GM12878 (cell line): ENCODE measurements at regions of chr14 and their contacts with region 1.

Region 1: DNA sequence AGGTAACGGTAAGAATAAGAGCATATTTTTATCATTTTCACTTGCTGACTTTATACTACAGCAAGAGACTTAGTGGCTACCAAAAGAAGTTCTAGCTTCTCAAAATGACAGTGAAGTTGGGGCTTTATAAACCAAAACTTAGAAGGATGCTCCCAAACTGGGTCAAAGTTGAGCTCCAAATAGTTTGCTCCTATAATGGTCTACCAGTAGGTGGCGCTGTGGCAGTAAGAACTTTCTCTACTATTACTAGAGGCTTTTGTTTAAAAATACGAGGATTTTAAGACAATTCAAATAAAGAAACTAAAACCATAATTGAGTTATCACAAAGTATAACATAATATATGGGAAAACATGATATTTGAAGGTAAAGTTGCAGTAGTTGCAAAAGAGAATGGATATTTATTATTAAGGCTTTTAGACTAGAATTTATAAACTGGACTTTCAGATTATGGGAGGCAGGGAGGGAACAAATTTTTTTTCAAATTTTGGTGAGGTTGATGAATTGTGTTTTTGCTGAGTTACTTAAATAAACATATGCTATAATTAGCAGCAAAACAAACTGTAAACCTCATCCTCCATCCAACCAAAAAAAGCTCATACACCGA is 75.0 kb downstream of the TGFB3 start:
- DNase-seq: no peak
- ATAC-seq: peak; percentile 73
- H3K4me3 ChIP-seq: no peak overlapping the region
- H3K27ac ChIP-seq: no peak overlapping the region
- H3K4me1 ChIP-seq: no peaks in the 10 kb centered on the region
- H3K27me3 ChIP-seq: no peaks in the 10 kb centered on the region
- CTCF ChIP-seq: peak; percentile 69 to 78 (median 71)
- EP300 ChIP-seq: no peak
- POLR2A ChIP-seq: no peak
- RAD21 ChIP-seq: peak; percentile 85

Region 2: GRCh38 chr14:75487155-75487671 is 419.6 kb before region 1 on chr14:
- CTCF ChIA-PET with region 1: no interaction called
- POLR2A ChIA-PET with region 1: no interaction called
- RAD21 ChIA-PET with region 1: no interaction called
- SMC1A ChIA-PET with region 1: no interaction called
- in situ Hi-C with region 1: no loop called
- intact Hi-C with region 1: no loop called
- DNase-seq: peak; percentile 89
- ATAC-seq: peak; percentile 84
- H3K4me3 ChIP-seq: no peak overlapping the region
- H3K27ac ChIP-seq: peak overlapping the region; percentile 69
- H3K4me1 ChIP-seq: peaks cover 33% of the 10 kb centered on the region
- H3K27me3 ChIP-seq: no peaks in the 10 kb centered on the region
- CTCF ChIP-seq: no peak
- EP300 ChIP-seq: peak; percentile 75 to 86; a peak in 3 of 4 replicates
- POLR2A ChIP-seq: no peak
- RAD21 ChIP-seq: peak; percentile 9; the same call in 1 of the 2 replicates

Region 3: GRCh38 chr14:75861161-75861621 is 45.6 kb before region 1 on chr14:
- CTCF ChIA-PET with region 1: interaction called, 11 read pairs
- POLR2A ChIA-PET with region 1: no interaction called
- RAD21 ChIA-PET with region 1: no interaction called
- SMC1A ChIA-PET with region 1: interaction called, 3 read pairs
- in situ Hi-C with region 1: no loop called
- intact Hi-C with region 1: no loop called
- DNase-seq: no peak
- ATAC-seq: no peak
- H3K4me3 ChIP-seq: no peak overlapping the region
- H3K27ac ChIP-seq: no peak overlapping the region
- H3K4me1 ChIP-seq: no peaks in the 10 kb centered on the region
- H3K27me3 ChIP-seq: no peaks in the 10 kb centered on the region
- CTCF ChIP-seq: no peak
- EP300 ChIP-seq: no peak
- POLR2A ChIP-seq: no peak
- RAD21 ChIP-seq: no peak

Region 4: GRCh38 chr14:75896341-75896740 is 10.4 kb before region 1 on chr14:
- CTCF ChIA-PET with region 1: interaction called, 10 read pairs
- POLR2A ChIA-PET with region 1: no interaction called
- RAD21 ChIA-PET with region 1: interaction called, 4 read pairs
- SMC1A ChIA-PET with region 1: interaction called, 4 read pairs
- in situ Hi-C with region 1: no loop called
- intact Hi-C with region 1: no loop called
- DNase-seq: no peak
- ATAC-seq: no peak
- H3K4me3 ChIP-seq: no peak overlapping the region
- H3K27ac ChIP-seq: no peak overlapping the region
- H3K4me1 ChIP-seq: no peaks in the 10 kb centered on the region
- H3K27me3 ChIP-seq: no peaks in the 10 kb centered on the region
- CTCF ChIP-seq: no peak
- EP300 ChIP-seq: no peak
- POLR2A ChIP-seq: no peak
- RAD21 ChIP-seq: no peak

Region 5: GRCh38 chr14:75995372-75996041 is 88.7 kb after region 1 on chr14:
- CTCF ChIA-PET with region 1: interaction called, 10 read pairs
- POLR2A ChIA-PET with region 1: no interaction called
- RAD21 ChIA-PET with region 1: interaction called, 7 read pairs
- SMC1A ChIA-PET with region 1: interaction called, 4 read pairs
- in situ Hi-C with region 1: no loop called
- intact Hi-C with region 1: no loop called
- DNase-seq: no peak
- ATAC-seq: no peak
- H3K4me3 ChIP-seq: no peak overlapping the region
- H3K27ac ChIP-seq: no peak overlapping the region
- H3K4me1 ChIP-seq: peaks cover 11% of the 10 kb centered on the region
- H3K27me3 ChIP-seq: no peaks in the 10 kb centered on the region
- CTCF ChIP-seq: no peak
- EP300 ChIP-seq: no peak
- POLR2A ChIP-seq: no peak
- RAD21 ChIP-seq: no peak